ENCODE measurements at regions of chr5 and their contacts with region 1.

Region 1: DNA sequence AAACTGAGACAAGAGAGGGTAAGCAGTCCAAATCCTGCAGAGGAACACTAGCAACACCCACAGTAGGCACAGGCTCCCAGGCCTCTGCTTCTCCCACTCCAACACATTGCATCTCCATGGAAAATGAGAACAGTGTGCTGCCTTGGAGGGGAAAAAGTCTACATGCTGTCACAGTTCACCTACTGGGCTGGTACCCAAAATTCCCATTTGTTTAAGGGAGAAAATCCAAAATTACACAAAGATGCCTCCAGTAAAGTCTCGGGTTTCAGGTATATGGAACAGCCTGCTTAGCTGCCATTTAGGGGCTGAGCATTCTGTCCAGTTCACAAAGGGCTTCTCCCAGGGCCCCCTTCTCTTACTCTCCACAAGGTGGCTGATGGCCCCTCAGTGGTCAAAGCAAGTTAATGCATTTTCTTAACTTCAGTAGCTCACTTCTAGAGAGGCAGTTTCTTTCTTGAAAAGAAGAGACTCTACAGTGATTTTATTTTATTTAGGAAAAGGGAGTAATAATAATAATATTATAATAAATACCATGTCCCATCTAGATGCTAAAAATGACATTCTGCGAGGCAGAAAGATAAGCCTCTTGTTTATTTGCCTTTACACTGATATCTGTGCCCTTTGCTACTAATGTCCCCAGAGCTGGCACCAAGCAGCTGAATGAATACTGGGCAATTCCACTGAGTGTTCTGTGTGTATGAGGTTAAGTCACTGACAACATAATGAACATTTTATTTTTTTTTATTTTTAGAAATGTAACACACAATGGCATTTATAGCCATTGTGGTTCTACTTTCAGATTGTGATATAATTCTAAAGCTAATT is 89.4 kb downstream of the RGS7BP start:
- DNase-seq: no peak
- H3K4me3 ChIP-seq: no peak overlapping the region
- H3K27ac ChIP-seq: no peak overlapping the region
- H3K4me1 ChIP-seq: peaks cover 0 to 12% (median 2%) of the 10 kb centered on the region in 4 experiments; a peak in 4 of 7 replicates
- H3K27me3 ChIP-seq: no peaks in the 10 kb centered on the region
- CTCF ChIP-seq: peak; percentile 42 to 98 (median 61)
- EP300 ChIP-seq: no peak
- POLR2A ChIP-seq: no peak
- RAD21 ChIP-seq: peak; percentile 77 to 82

Region 2: DNA sequence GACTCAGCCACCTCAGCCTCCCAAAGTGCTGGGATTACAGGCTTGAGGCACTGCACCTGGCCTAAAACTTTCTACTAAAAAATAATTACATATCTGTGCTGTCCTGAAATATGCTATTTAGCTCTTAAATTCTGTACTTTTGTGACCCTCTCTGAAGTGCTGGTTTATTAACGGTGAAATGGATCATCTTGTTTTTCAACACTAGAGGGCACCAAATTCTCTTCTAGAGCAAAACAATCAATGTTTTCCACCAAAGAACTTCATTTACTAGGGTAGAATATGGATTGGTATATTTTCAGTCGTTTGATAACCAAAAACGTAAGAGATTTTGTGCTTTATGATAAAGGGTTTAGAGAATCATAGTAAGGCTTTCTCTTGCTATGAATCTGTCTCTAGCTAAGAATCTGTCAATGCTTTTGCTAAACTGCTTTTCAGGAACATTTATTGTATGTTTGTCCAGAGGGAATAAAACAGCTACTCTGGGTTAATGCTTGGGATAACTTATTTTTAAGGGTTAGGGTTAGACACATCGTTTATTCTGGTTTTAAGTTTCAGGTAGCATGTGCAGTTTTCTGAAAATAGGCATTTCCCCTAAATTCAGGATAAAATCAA is 366.0 kb before region 1 on chr5:
- CTCF ChIA-PET with region 1: interaction called, 17 read pairs
- POLR2A ChIA-PET with region 1: no interaction called
- DNase-seq: no peak
- H3K4me3 ChIP-seq: no peak overlapping the region
- H3K27ac ChIP-seq: no peak overlapping the region
- H3K4me1 ChIP-seq: no peaks in the 10 kb centered on the region
- H3K27me3 ChIP-seq: no peaks in the 10 kb centered on the region
- CTCF ChIP-seq: peak in 2 of 3 experiments; percentile 33 to 54; a peak in 2 of 4 replicates
- EP300 ChIP-seq: no peak
- POLR2A ChIP-seq: no peak
- RAD21 ChIP-seq: peak; percentile 68 to 80

Region 3: DNA sequence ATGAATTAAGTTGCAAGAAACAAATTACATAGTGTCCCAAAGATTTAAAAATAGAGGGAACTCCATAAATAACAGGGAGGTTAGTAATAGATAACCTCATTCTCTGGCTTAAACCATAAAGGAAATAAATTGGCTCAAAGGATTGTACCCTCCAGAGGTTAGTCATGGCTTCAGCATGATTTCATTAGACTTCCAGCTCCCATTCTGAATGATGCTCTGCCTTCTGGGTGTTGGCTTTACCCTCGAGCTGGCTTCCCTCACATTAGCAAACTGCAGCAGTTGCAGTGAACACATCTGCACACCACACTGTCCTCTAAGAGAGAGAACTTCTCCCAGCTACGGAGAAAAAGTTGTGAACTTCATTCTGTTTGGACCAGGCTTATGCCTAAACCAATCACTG is 19.0 kb before region 1 on chr5:
- CTCF ChIA-PET with region 1: interaction called, 17 read pairs
- POLR2A ChIA-PET with region 1: no interaction called
- DNase-seq: no peak
- H3K4me3 ChIP-seq: no peak overlapping the region
- H3K27ac ChIP-seq: no peak overlapping the region
- H3K4me1 ChIP-seq: no peaks in the 10 kb centered on the region
- H3K27me3 ChIP-seq: no peaks in the 10 kb centered on the region
- CTCF ChIP-seq: no peak
- EP300 ChIP-seq: no peak
- POLR2A ChIP-seq: no peak
- RAD21 ChIP-seq: no peak

Measured in H1 (cell line).